ENCODE measurements at regions of chr9 and their contacts with region 1.

Region 1: GRCh38 chr9:131641618-131642495 is 96.5 kb downstream of the PRRT1B start:
- DNase-seq: no peak
- H3K4me3 ChIP-seq: no peak overlapping the region
- H3K27ac ChIP-seq: peak overlapping the region; percentile 22 to 42
- H3K4me1 ChIP-seq: peaks cover 0 to 10% of the 10 kb centered on the region in 2 donors
- H3K27me3 ChIP-seq: no peaks in the 10 kb centered on the region
- CTCF ChIP-seq: peak in 1 of 3 experiments; percentile 17

Region 2: DNA sequence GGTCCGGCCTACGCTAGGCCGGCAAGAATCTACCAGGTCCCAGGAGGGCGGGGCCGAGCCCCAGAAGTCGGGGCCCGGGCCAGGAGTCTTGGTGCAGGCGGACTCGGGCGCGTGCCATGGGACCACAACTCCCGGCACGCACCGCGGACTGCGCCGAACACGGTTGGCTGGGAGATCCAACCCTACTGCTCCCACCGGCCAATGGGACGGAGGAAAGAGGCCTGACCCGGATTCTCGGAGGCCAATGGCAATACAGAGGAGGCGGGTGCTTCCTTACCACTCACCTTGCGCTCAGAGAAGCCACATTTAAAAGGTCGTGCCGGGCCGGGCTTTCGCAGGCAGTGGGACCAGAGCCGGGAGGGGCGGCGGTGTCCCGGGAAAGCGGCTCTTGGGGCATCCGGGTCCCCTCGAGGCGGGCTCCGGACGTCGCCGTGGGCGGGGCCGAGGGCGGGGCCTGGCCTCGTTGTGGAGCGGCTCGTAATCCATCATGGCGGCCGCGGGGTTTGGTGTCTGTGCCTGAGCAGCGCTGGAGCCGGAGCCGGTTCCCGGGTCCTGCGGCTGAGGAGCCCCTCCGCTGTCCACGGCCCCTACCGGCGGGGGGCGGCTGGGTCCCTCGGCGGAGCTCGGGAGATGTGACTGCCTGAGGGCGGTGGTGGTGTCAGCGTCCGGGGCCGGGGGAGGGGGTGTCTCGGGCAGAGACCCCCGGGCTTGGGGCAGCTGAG is 929.1 kb before region 1 on chr9:
- intact Hi-C with region 1: no loop called
- DNase-seq: peak; percentile 96 to 99
- H3K4me3 ChIP-seq: peak overlapping the region; percentile 78 to 90
- H3K27ac ChIP-seq: peak overlapping the region; percentile 98 to 99
- H3K4me1 ChIP-seq: peaks cover 0 to 16% of the 10 kb centered on the region in 2 donors
- H3K27me3 ChIP-seq: no peaks in the 10 kb centered on the region
- CTCF ChIP-seq: no peak

Region 3: DNA sequence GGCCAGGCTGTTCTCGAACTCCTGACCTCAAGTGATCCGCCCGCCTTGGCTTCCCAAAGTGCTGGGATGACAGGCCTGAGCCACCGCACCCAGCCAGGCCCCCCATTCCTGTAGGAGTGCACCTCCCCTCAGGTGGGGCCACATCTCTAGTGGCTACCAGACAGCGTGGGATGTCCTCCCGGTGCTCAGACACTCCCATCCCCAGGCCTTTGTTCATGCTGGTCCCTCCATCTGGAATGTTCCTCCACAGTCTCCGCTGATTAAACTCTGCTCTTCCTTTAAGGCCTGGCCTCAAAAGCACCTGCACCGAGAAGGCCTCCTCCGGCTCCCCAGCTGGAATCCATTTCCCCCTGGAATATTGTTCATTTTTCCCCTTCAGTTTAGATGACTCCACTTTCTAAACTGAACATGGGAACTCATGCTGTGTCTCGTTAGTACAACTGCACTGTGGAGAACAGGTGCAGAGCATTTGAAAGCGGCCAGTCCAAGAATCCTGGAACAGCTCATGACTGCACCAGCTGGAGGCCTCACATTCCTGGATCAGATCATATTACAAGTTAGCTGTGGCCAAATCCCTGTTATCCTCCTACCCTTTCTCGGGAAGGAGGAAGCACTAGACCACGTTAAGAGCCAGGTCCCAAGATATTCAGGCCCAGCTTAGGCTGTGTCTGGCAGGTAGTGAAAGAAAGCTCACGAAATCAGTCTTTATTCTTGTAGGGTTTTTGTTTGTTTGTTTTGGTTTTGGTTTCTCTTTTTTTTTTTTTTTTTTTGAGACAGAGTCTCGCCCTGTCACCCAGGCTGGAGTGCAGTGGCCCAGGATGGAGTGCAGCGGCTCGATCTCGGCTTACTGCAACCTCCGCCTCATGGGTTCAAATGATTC is 258.8 kb before region 1 on chr9:
- intact Hi-C with region 1: no loop called
- DNase-seq: no peak
- H3K4me3 ChIP-seq: no peak overlapping the region
- H3K27ac ChIP-seq: peak overlapping the region in 1 of 2 donors; percentile 0
- H3K4me1 ChIP-seq: no peaks in the 10 kb centered on the region
- H3K27me3 ChIP-seq: no peaks in the 10 kb centered on the region
- CTCF ChIP-seq: no peak

Region 4: DNA sequence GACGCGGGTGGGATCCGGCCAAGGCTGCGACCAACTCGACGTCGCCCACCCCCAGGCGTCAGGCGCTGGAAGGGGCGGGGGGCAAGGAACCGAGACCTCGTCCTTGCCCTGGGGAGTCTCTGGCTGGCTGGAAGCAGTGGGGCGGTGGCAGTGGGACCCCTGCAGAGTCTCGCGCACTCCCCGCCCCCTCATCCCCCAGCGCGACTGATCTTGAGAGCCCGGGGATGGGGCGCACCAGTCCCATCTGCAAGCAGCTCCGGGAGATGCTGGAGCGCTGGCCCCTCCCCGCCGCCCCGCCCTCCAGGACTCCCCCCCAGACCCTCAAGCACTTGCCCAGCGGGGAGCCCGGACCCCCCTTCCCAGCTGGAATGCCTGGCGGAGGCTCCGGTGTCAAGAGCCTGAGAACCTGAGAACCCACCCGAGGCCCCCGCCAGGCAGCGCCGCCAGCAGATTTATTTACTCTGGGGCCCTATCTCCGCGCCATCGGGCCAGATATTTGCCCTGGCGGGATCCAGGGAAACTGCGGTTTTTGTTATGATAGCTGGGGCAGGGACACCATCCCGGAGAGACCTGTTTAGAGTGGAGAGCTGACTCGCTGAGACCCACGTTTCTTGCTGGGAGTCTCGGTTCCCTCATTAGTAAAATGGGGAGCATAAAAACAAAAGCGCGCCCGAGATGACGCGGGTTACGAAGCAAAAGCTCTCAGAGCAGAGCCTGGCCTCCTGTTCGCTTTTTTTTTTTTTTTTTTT is 95.3 kb before region 1 on chr9:
- intact Hi-C with region 1: no loop called
- DNase-seq: no peak
- H3K4me3 ChIP-seq: peak overlapping the region; percentile 51 to 52
- H3K27ac ChIP-seq: no peak overlapping the region
- H3K4me1 ChIP-seq: peaks cover 0 to 11% of the 10 kb centered on the region in 2 donors
- H3K27me3 ChIP-seq: no peaks in the 10 kb centered on the region
- CTCF ChIP-seq: no peak

Region 5: DNA sequence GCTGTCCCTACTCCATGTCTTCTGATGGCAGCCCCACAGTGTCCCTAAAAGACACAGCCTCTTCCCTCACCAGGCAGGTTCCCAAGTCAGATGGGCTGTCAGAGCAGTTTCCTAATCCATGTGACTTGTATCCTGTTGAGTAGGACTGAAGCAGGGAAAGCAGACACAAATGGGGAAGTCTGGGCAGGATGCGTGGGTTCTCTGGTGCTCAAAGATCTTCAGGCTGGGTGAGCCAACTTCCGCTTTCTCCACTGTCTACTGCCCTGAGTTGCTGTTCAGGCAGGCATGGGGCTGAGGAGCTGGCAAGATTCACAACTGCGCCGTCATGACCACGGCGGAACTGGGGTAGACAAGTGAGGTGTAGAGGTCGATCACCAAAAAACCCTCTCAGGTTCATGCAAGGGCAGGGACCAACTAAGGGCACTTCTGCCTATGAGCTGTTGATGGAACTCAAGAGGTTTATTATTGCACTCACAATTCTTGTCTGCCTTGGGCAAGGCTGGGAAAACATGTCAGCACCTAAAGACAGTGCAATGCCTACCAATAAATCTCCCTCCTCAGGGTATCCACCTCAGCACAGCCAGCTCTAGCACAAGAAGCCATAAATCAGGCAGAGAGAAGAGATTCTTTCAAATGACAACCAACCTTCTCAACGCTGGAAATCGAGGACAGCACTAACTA is 14.6 kb after region 1 on chr9:
- intact Hi-C with region 1: loop called (anchors 2 kb)
- DNase-seq: peak; percentile 72 to 87
- H3K4me3 ChIP-seq: no peak overlapping the region
- H3K27ac ChIP-seq: peak overlapping the region; percentile 16 to 47
- H3K4me1 ChIP-seq: peaks cover 0 to 29% of the 10 kb centered on the region in 2 donors
- H3K27me3 ChIP-seq: no peaks in the 10 kb centered on the region
- CTCF ChIP-seq: no peak